SK-N-SH (cell line): ENCODE measurements at regions of chr14 and their contacts with region 1.

Region 1: DNA sequence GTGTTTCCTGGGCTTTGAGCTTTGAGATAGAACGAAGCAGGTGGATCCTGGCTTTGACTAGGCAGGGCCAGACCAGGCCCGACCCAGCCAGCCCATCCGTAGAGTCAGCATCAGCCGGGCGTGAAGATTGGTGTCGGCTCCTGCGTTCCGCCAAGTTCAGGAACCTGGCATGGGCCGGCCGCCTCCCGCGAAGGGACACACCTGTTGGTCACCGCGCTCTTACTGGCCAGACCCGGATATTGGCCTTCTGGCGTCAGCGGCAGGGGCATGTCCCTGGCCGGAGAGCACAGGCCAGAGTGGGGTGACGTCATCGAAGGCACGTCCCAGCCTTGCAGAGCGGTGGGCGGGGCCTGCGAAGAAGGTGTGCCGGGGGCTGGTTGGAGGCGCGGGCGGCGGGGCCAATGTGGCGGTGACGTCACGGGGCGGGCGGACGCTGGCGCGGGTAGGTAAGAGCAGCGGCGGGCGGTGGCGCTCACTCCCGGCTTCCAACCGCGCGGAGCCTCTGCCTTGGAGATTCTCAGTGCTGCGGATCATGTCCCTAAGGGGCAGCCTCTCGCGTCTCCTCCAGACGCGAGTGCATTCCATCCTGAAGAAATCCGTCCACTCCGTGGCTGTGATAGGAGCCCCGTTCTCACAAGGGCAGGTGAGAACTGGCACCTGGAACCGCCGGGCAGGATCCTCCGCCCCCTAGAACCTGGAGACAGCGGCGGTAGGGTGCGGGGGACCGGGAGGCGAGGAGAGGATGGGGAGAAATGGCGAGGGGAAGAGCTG is at the start of gene ARG2:
- DNase-seq: peak; percentile 97
- H3K4me3 ChIP-seq: peak within 1 kb of the TSS; percentile 72 to 80
- H3K27ac ChIP-seq: peak within 1 kb of the TSS; percentile 8 to 65; a peak in 3 of 4 replicates
- H3K4me1 ChIP-seq: peaks cover 5 to 10% of the 10 kb centered on the region in 2 experiments; a peak in 3 of 4 replicates
- H3K27me3 ChIP-seq: no peaks in the 10 kb centered on the region
- CTCF ChIP-seq: no peak
- EP300 ChIP-seq: no peak
- RAD21 ChIP-seq: no peak
- polyA plus RNA-seq, gene ARG2: 2.6 TPM in 2 replicates

Region 2: GRCh38 chr14:67541448-67542387 is 77.9 kb before region 1 on chr14:
- CTCF ChIA-PET with region 1: no interaction called
- POLR2A ChIA-PET with region 1: no interaction called
- DNase-seq: no peak
- H3K4me3 ChIP-seq: no peak overlapping the region
- H3K27ac ChIP-seq: no peak overlapping the region
- H3K4me1 ChIP-seq: no peaks in the 10 kb centered on the region
- H3K27me3 ChIP-seq: 0 out of 2 replicates have a peak, but pooled peaks cover 4% of the 10 kb centered on the region
- CTCF ChIP-seq: no peak
- EP300 ChIP-seq: no peak
- RAD21 ChIP-seq: no peak

Region 3: GRCh38 chr14:67583711-67584644 is 35.7 kb before region 1 on chr14:
- CTCF ChIA-PET with region 1: interaction called, 10 read pairs
- POLR2A ChIA-PET with region 1: no interaction called
- DNase-seq: peak; percentile 80
- H3K4me3 ChIP-seq: no peak overlapping the region; a peak in 1 of 4 replicates
- H3K27ac ChIP-seq: no peak overlapping the region
- H3K4me1 ChIP-seq: no peaks in the 10 kb centered on the region
- H3K27me3 ChIP-seq: no peaks in the 10 kb centered on the region
- CTCF ChIP-seq: peak; percentile 74
- EP300 ChIP-seq: no peak
- RAD21 ChIP-seq: peak; percentile 85

Region 4: GRCh38 chr14:67599698-67600561 is 19.7 kb before region 1 on chr14 and contains the start of gene PIGH:
- CTCF ChIA-PET with region 1: interaction called, 24 read pairs
- POLR2A ChIA-PET with region 1: interaction called, 3 read pairs
- DNase-seq: peak; percentile 97
- H3K4me3 ChIP-seq: peak within 1 kb of the TSS; percentile 77 to 90
- H3K27ac ChIP-seq: peak within 1 kb of the TSS; percentile 65 to 66
- H3K4me1 ChIP-seq: peaks cover 0 to 6% of the 10 kb centered on the region in 2 experiments; a peak in 2 of 4 replicates
- H3K27me3 ChIP-seq: no peaks in the 10 kb centered on the region
- CTCF ChIP-seq: peak; percentile 58
- EP300 ChIP-seq: no peak
- RAD21 ChIP-seq: no peak; the same call in 1 of the 2 replicates
- polyA plus RNA-seq, gene PIGH: 23.6 and 26.5 TPM in 2 replicates

Region 5: DNA sequence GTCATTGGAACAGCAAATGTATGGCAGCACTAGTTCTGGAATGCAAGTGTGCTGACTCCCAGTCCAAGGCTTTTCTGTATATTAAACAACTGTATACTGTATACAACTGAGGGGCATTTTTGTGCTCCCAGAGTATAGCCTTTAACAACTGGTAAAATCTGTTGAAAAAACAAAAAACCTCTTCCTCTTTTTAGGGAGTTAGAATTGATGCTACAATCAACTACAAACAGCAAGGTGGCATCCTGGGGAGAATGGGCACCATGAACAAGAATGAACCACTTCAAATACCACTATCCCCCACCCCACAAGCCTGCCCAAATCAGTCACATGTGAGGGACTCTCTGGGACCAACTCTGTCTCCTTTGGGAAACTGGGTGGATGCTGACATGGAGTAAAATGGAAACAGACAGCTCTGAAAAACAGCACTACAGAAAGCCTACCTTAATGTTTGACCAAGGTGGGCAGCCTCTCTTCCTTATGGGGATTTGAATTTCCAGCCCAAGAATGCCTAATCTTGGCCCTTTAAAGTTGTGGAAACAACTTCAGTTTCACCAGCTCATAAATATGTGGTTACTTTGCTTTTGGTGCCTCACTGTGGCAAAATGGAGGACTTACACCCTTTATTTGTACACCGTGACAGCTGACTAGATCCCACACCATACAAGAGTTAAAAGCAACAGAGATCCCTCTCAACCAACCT is 47.3 kb after region 1 on chr14:
- CTCF ChIA-PET with region 1: interaction called, 54 read pairs
- POLR2A ChIA-PET with region 1: interaction called, 3 read pairs
- DNase-seq: peak; percentile 59
- H3K4me3 ChIP-seq: no peak overlapping the region; a peak in 1 of 4 replicates
- H3K27ac ChIP-seq: no peak overlapping the region
- H3K4me1 ChIP-seq: 0 out of 4 replicates have a peak, but pooled peaks cover 0 to 3% of the 10 kb centered on the region in 2 experiments
- H3K27me3 ChIP-seq: no peaks in the 10 kb centered on the region
- CTCF ChIP-seq: peak; percentile 78
- EP300 ChIP-seq: no peak
- RAD21 ChIP-seq: peak; percentile 82

Region 6: DNA sequence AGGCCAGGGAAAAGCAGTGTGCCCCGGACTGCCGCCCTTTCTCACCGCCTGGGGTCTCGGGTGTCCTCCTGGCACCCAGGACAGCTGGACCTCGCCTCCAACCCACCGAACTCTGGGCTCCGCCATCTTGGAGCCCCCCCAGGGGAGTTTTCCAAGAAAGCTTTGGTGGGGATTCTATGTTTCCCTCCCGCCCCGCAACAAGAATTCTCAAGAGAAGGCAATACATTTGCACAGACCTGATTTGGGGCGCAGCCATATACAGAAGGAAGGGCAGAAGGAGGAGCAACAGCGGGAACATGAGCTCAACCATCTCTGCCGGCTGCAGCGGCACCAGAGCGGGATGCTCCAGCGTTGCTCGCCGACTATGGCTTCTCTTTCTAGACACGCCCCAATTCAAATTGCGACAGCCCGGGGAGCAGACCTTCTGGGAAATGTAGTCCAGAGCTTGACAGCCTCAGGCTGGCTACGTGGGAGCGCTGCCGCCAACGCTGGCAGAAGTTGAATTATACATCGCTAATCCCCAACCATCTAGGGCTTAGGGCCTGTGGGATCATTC is 75.8 kb after region 1 on chr14 and contains the start of gene RDH11:
- CTCF ChIA-PET with region 1: interaction called, 85 read pairs
- POLR2A ChIA-PET with region 1: interaction called, 3 read pairs
- DNase-seq: peak; percentile 85
- H3K4me3 ChIP-seq: peak within 1 kb of the TSS; percentile 98 to 100
- H3K27ac ChIP-seq: peak within 1 kb of the TSS; percentile 87 to 90
- H3K4me1 ChIP-seq: peaks cover 6 to 12% of the 10 kb centered on the region in 2 experiments; a peak in 2 of 4 replicates
- H3K27me3 ChIP-seq: no peaks in the 10 kb centered on the region
- CTCF ChIP-seq: no peak
- EP300 ChIP-seq: no peak
- RAD21 ChIP-seq: no peak
- polyA plus RNA-seq, gene RDH11: 44.7 and 65.8 TPM in 2 replicates